Activated naive CD8-positive, alpha-beta T cell treated with anti-CD3 and anti-CD28 coated beads, Interleukin-2, amount 10 ng/mL, durations not matched to agents 7 days and 5 days (primary cell): ENCODE measurements at regions of chr2 and their contacts with region 1.

Region 1: GRCh38 chr2:219229305-219230058 is at the starts of genes ANKZF1 and ATG9A:
- DNase-seq: peak; percentile 94
- ATAC-seq: peak; percentile 95
- H3K4me3 Mint-ChIP-seq: peak within 1 kb of the TSS; percentile 90
- H3K27ac Mint-ChIP-seq: peak within 1 kb of the TSS; percentile 93
- H3K4me1 Mint-ChIP-seq: peaks cover 40% of the 10 kb centered on the region
- H3K27me3 Mint-ChIP-seq: no peaks in the 10 kb centered on the region
- total RNA-seq, gene ANKZF1: 170 to 177 TPM
- total RNA-seq, gene ATG9A: 56.0 to 62.1 TPM

Region 2: DNA sequence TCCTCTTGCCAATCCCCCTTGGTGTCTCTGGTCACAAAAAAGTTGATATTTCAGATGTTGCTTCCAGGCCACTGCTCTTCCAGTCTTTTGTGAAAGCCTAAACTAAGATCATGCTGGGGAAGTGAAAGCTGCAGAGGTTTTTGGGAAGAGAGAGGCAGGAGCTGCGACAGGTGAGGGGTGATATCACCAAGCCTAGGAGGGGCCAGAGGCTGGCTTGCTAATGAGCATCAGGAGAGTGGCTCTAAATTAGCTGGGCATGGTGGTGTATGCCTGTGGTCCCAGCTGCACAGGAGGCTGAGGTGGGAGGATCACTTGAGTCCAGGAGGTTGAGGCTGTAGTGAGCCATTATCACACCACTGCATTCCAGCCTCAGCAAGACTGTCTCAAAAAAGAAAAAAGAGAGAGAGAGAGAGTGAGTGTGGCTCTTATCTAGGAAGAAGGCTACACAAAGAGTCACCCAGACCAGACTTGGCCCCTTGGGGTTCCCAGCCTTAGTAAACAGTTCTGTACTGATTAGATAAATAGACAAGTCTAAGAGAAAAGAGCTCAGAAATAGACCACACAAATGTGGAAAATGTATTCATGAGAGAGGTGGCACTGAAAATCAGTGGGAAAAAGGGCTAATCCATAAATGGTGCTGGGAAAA is 284.6 kb before region 1 on chr2:
- POLR2A ChIA-PET with region 1: no interaction called
- DNase-seq: no peak
- ATAC-seq: no peak
- H3K4me3 Mint-ChIP-seq: no peak overlapping the region
- H3K27ac Mint-ChIP-seq: no peak overlapping the region
- H3K4me1 Mint-ChIP-seq: no peaks in the 10 kb centered on the region
- H3K27me3 Mint-ChIP-seq: peaks cover 43% of the 10 kb centered on the region

Region 3: GRCh38 chr2:219142329-219142728 is 87.2 kb before region 1 on chr2:
- POLR2A ChIA-PET with region 1: no interaction called
- DNase-seq: no peak
- ATAC-seq: no peak
- H3K4me3 Mint-ChIP-seq: no peak overlapping the region
- H3K27ac Mint-ChIP-seq: no peak overlapping the region
- H3K4me1 Mint-ChIP-seq: peaks cover 2% of the 10 kb centered on the region
- H3K27me3 Mint-ChIP-seq: no peaks in the 10 kb centered on the region

Region 4: DNA sequence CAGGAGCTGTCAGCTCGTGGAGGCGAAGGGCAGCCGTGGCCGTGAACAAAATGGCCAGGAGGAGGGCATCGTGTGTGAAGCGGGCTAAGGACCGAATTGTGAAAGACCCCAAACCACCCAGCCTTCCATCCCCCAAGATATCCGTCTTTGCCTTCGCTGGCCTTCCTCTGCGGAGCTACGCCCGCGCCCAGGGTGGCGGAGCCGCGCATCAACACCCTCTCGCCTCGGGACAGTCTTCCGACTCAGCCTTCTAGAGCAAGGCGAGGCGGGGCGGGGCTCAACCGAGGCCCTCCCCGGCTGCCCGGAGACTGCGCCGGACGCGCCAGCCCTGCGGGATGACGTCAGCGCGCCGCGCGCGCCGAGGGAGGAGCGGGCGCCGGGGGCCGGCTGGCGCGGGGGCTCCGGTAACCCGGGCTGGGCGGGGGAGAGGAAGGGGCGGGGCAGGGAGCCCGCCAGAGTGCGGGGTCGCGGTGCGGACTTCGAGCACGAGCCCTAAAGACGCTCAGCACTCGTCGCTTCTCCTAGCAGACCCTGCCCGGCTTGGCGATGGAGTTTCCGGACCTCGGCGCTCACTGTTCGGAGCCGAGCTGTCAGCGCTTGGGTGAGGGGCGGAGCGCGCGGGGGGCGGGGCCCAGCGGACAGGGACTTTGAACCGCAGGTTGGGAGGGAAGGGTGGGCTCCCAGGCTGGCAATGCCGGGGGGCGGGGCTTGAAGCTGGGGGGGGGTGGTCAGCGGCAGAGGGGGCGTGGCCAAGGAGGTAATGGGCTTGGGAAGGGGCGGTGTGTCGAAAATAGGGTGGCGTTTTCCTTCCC is 22.8 kb before region 1 on chr2 and contains the start of gene ZFAND2B:
- POLR2A ChIA-PET with region 1: interaction called, 15 read pairs
- DNase-seq: peak; percentile 99
- ATAC-seq: peak; percentile 97
- H3K4me3 Mint-ChIP-seq: peak within 1 kb of the TSS; percentile 85
- H3K27ac Mint-ChIP-seq: peak within 1 kb of the TSS; percentile 93
- H3K4me1 Mint-ChIP-seq: peaks cover 47% of the 10 kb centered on the region
- H3K27me3 Mint-ChIP-seq: no peaks in the 10 kb centered on the region
- total RNA-seq, gene ZFAND2B: 68.1 to 69.8 TPM

Region 5: DNA sequence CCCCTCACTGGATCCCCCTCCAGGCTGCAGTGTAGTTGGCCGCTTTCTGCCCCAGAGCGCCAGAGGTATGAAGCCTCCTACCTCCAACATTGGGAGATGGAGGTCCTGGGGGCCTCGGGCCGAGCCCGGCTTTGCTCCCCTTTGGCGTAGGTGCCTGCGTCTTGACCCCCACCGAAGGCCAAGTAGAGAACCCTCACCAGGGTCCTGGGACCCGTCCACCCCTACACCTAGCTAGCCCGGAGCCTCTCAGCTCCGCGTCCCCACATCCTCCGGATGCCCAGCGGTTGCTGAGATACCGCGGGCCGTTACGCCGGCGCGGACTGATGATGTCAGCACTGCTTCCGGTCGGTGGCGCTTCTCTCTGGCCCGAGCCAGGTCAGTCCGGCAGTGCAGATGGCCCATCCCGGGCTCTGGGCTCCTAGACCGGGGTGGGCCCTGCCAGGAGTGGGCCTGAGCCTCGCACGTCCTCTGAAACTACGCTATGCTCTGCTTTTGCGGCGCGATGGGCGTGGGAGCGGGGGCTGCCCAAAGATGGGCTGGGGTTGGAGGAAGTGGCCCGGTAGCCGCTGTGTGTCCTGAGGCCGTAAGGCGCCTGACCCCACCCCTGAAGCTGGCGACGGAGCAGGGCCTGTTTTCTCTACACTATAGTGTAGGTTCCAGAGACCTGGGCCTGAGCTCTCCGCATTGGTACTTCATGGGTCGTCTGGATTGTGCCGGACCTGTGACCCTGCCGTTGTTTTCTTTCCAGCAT is 15.8 kb after region 1 on chr2 and contains the starts of genes GLB1L and STK16:
- POLR2A ChIA-PET with region 1: interaction called, 35 read pairs
- DNase-seq: peak; percentile 96
- ATAC-seq: peak; percentile 64
- H3K4me3 Mint-ChIP-seq: peak within 1 kb of the TSS; percentile 99
- H3K27ac Mint-ChIP-seq: peak within 1 kb of the TSS; percentile 90
- H3K4me1 Mint-ChIP-seq: peaks cover 60% of the 10 kb centered on the region
- H3K27me3 Mint-ChIP-seq: no peaks in the 10 kb centered on the region
- total RNA-seq, gene GLB1L: 3.3 to 4.1 TPM
- total RNA-seq, gene STK16: 34.0 to 36.0 TPM

Region 6: GRCh38 chr2:219278655-219279516 is 49.4 kb after region 1 on chr2 and contains the start of gene DNAJB2:
- POLR2A ChIA-PET with region 1: interaction called, 11 read pairs
- DNase-seq: peak; percentile 97
- ATAC-seq: peak; percentile 91
- H3K4me3 Mint-ChIP-seq: peak within 1 kb of the TSS; percentile 98
- H3K27ac Mint-ChIP-seq: peak within 1 kb of the TSS; percentile 99
- H3K4me1 Mint-ChIP-seq: peaks cover 38% of the 10 kb centered on the region
- H3K27me3 Mint-ChIP-seq: peaks cover 4% of the 10 kb centered on the region
- total RNA-seq, gene DNAJB2: 65.9 to 67.5 TPM